ENCODE measurements at regions of chr7 and their contacts with region 1.

Region 1: DNA sequence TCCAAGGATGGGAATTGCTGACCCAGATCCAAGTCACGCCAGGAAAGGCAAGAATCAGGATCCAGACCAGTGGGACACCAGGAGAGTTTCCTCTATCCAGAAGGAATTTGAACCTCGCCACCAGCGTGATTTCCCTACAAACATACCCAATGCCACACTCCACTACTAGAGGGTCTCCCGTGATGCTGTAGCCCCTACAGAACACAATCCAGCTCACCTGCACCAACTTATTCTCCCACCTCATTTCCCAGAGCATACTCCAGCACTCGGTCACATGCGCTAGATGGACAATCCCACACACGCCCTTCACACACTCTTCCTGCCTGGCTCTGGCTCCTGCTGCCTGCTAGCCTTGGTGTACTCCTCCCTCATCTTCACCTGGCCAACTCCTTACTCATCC is 142.1 kb upstream of the PDE1C start:
- DNase-seq: no peak
- ATAC-seq: no peak
- H3K4me3 ChIP-seq: no peak overlapping the region
- H3K27ac ChIP-seq: no peak overlapping the region
- H3K4me1 ChIP-seq: no peaks in the 10 kb centered on the region
- H3K27me3 ChIP-seq: no peaks in the 10 kb centered on the region
- CTCF ChIP-seq: no peak

Region 2: GRCh38 chr7:31776616-31777015 is 435.7 kb before region 1 on chr7:
- intact Hi-C with region 1: no loop called
- DNase-seq: no peak
- ATAC-seq: no peak
- H3K4me3 ChIP-seq: no peak overlapping the region
- H3K27ac ChIP-seq: no peak overlapping the region
- H3K4me1 ChIP-seq: no peaks in the 10 kb centered on the region
- H3K27me3 ChIP-seq: no peaks in the 10 kb centered on the region
- CTCF ChIP-seq: no peak

Region 3: GRCh38 chr7:32347244-32347828 is 135.0 kb after region 1 on chr7:
- intact Hi-C with region 1: loop called in 1 of 2 experiments (anchors 5 kb)
- DNase-seq: no peak
- ATAC-seq: no peak
- H3K4me3 ChIP-seq: no peak overlapping the region
- H3K27ac ChIP-seq: no peak overlapping the region
- H3K4me1 ChIP-seq: no peaks in the 10 kb centered on the region
- H3K27me3 ChIP-seq: no peaks in the 10 kb centered on the region
- CTCF ChIP-seq: peak; percentile 55

Region 4: GRCh38 chr7:32479574-32480200 is 267.4 kb after region 1 on chr7:
- intact Hi-C with region 1: loop called in 1 of 2 experiments (anchors 5 kb)
- DNase-seq: no peak
- ATAC-seq: peak in 1 of 4 donors; percentile 33
- H3K4me3 ChIP-seq: no peak overlapping the region
- H3K27ac ChIP-seq: no peak overlapping the region
- H3K4me1 ChIP-seq: no peaks in the 10 kb centered on the region
- H3K27me3 ChIP-seq: no peaks in the 10 kb centered on the region
- CTCF ChIP-seq: peak; percentile 69

Measured in psoas muscle (tissue), 8 donors.